ENCODE measurements at regions of chr2 and their contacts with region 1.

Region 1: GRCh38 chr2:167292430-167293171 is 404.3 kb downstream of the XIRP2 start:
- DNase-seq: peak; percentile 87 to 93 (median 91)
- ATAC-seq: peak; percentile 96
- H3K4me3 ChIP-seq: peak within 1 kb of the TSS; percentile 54
- H3K4me1 ChIP-seq: no peaks in the 10 kb centered on the region
- CTCF ChIP-seq: no peak

Region 2: GRCh38 chr2:167249197-167249596 is 43.4 kb before region 1 on chr2:
- intact Hi-C with region 1: no loop called
- DNase-seq: no peak
- ATAC-seq: no peak
- H3K4me3 ChIP-seq: no peak overlapping the region
- H3K4me1 ChIP-seq: no peaks in the 10 kb centered on the region
- CTCF ChIP-seq: no peak

Region 3: GRCh38 chr2:167388497-167388896 is 95.9 kb after region 1 on chr2:
- intact Hi-C with region 1: loop called in 1 of 2 experiments (anchors 10 kb)
- DNase-seq: no peak
- ATAC-seq: no peak
- H3K4me3 ChIP-seq: no peak overlapping the region
- H3K4me1 ChIP-seq: peaks cover 10% of the 10 kb centered on the region
- CTCF ChIP-seq: no peak